MCF 10A (cell line): ENCODE measurements at regions of chr5 and their contacts with region 1.

Region 1: DNA sequence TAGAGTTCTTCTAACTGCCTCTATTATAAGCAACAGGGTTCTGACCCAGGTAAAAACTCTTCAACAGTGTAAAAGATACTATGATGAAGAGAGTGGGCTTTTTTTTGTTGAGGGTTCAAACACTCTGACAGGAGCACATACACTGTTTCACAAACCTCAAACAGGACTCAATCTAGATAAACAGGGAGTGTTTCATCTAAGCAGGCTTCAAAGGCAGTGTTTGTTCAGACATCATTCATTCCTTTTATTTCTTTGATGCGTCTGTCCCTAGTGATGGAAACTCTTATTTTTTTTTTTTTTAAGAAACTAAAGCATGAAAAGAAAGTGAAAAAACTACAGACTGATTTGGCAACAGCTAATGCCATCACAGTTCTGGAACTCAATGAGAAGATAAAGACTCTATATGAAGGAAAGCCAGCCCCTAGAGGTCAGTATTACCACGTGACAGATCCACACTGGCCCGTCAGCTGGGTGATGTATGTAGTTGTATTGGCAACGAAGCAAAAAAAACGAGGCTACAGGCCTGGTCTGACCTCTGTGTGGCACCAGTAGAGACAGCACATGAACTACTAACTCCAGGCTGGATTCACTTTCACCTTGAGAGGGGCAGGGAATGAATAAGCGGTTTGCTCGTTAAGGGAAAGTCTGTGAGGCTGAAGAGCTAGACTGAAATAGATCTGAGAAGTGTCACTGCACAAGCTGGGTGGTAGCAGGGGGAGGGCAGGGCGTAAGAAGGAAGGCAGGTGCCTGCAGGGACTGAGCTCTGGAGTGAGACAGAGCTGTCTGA is 172.2 kb downstream of the CCDC192 start:
- DNase-seq: peak; percentile 86
- H3K4me3 Mint-ChIP-seq: no peak overlapping the region
- H3K27ac Mint-ChIP-seq: peak overlapping the region; percentile 47
- H3K4me1 Mint-ChIP-seq: peaks cover 24% of the 10 kb centered on the region
- H3K27me3 Mint-ChIP-seq: no peaks in the 10 kb centered on the region
- CTCF ChIP-seq: peak; percentile 58

Region 2: DNA sequence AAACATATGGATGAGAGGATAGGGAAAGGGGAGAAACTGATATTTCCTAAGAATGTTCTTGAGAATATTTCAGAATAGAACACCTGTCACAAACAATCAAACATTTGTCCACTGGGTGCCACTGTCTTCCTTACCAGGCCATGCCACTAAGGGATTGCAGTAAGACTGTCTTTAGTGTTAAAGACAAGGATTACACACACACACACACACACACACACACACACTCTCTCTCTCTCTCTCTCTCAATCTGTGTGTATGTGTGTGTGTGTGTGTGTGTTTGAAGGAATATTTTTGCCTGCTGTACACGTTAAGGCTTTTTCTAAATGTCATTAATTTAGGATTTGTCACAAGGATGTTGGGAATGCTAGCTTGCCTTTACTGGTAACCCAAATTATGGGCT is 117.9 kb before region 1 on chr5:
- CTCF ChIA-PET with region 1: interaction called, 13 read pairs
- POLR2A ChIA-PET with region 1: interaction called, 3 read pairs
- intact Hi-C with region 1: loop called (anchors 1 kb)
- DNase-seq: peak; percentile 74
- H3K4me3 Mint-ChIP-seq: no peak overlapping the region
- H3K27ac Mint-ChIP-seq: no peak overlapping the region
- H3K4me1 Mint-ChIP-seq: no peaks in the 10 kb centered on the region
- H3K27me3 Mint-ChIP-seq: no peaks in the 10 kb centered on the region
- CTCF ChIP-seq: peak; percentile 64

Region 3: GRCh38 chr5:127833999-127834953 is 41.2 kb before region 1 on chr5:
- CTCF ChIA-PET with region 1: interaction called, 11 read pairs
- POLR2A ChIA-PET with region 1: no interaction called
- intact Hi-C with region 1: no loop called
- DNase-seq: no peak
- H3K4me3 Mint-ChIP-seq: no peak overlapping the region
- H3K27ac Mint-ChIP-seq: no peak overlapping the region
- H3K4me1 Mint-ChIP-seq: peaks cover 15% of the 10 kb centered on the region
- H3K27me3 Mint-ChIP-seq: no peaks in the 10 kb centered on the region
- CTCF ChIP-seq: no peak

Region 4: GRCh38 chr5:128201065-128201926 is 325.9 kb after region 1 on chr5:
- CTCF ChIA-PET with region 1: interaction called, 41 read pairs
- POLR2A ChIA-PET with region 1: no interaction called
- intact Hi-C with region 1: loop called (anchors 1 kb)
- DNase-seq: peak; percentile 81
- H3K4me3 Mint-ChIP-seq: peak overlapping the region; percentile 42
- H3K27ac Mint-ChIP-seq: no peak overlapping the region
- H3K4me1 Mint-ChIP-seq: peaks cover 21% of the 10 kb centered on the region
- H3K27me3 Mint-ChIP-seq: no peaks in the 10 kb centered on the region
- CTCF ChIP-seq: peak; percentile 95

Region 5: DNA sequence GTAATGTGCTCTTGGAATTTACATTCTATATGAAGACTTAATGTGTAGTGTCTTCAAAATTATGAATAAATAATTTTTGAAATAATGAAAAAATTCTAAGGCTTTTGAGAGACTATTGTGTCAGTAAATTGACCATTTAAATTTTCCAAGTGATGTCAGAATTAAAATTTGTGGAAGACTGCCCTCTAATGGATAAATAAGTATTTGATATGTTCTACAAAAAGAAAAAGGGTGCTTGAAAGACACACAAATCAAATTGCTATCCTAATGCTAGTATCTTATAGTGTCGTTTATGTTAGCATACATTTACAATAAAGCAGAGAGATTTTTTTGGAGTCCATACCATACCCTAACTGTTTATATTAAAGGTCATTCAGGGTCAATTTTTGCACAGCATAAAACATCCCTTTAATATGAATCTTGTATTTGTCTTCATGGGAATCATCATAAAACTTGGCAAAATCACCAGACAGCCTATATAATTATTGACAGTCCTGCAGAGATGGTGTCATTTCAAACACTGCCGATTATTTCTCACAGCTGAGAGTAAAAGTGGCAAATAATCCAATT is 969.0 kb after region 1 on chr5:
- CTCF ChIA-PET with region 1: interaction called, 4 read pairs
- POLR2A ChIA-PET with region 1: no interaction called
- intact Hi-C with region 1: loop called (anchors 1 kb)
- DNase-seq: peak; percentile 46
- H3K4me3 Mint-ChIP-seq: no peak overlapping the region
- H3K27ac Mint-ChIP-seq: no peak overlapping the region
- H3K4me1 Mint-ChIP-seq: no peaks in the 10 kb centered on the region
- H3K27me3 Mint-ChIP-seq: no peaks in the 10 kb centered on the region
- CTCF ChIP-seq: peak; percentile 59